BJ (cell line): ENCODE measurements at regions of chr4 and their contacts with region 1.

Region 1: DNA sequence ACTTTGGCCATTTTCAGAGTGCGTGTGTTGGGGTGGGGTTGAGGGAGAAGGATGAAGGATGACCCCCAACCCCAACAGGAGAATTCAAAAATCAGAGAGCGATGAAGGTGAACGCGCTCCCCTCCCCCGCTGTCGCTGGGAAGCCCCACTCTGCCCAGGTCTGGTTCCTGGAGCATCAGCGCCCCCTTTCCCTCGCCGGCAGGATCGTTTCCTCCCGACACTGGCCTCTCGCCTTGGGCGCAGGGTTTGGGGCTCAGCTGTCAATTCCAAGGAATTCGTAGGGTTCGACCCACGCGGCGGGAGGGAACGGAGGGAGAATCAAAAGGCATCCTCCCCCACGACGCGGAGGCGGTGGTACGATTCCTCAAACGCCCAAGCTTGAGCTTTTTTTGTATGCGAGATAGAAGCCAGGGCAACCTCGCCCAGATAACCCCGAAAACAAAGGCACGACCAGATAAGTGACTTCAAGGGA is 1.0 kb upstream of the PDGFRA start:
- DNase-seq: no peak
- H3K4me3 ChIP-seq: peak overlapping the region; percentile 92
- H3K27me3 ChIP-seq: no peaks in the 10 kb centered on the region
- CTCF ChIP-seq: peak; percentile 97

Region 2: GRCh38 chr4:54217642-54218495 is 10.2 kb before region 1 on chr4:
- CTCF ChIA-PET with region 1: interaction called, 26 read pairs
- POLR2A ChIA-PET with region 1: interaction called, 15 read pairs
- DNase-seq: peak; percentile 72
- H3K4me3 ChIP-seq: peak overlapping the region; percentile 39
- H3K27me3 ChIP-seq: no peaks in the 10 kb centered on the region; the same call in 1 of the 2 replicates
- CTCF ChIP-seq: peak; percentile 87